Naive thymus-derived CD4-positive, alpha-beta T cell (primary cell): ENCODE measurements at regions of chr3 and their contacts with region 1.

Region 1: GRCh38 chr3:12810013-12810780 is 13.7 kb downstream of the CAND2 start:
- DNase-seq: peak; percentile 89 to 98 (median 94)
- ATAC-seq: peak; percentile 99
- H3K4me3 ChIP-seq: peak overlapping the region; percentile 79
- H3K4me3 Mint-ChIP-seq: peak overlapping the region; percentile 63 to 82 (median 77)
- H3K27ac ChIP-seq: peak overlapping the region; percentile 68
- H3K27ac Mint-ChIP-seq: peak overlapping the region; percentile 23 to 85 (median 64)
- H3K4me1 ChIP-seq: peaks cover 3 to 7% of the 10 kb centered on the region in 2 donors
- H3K4me1 Mint-ChIP-seq: peaks cover 4 to 16% (median 12%) of the 10 kb centered on the region in 7 donors
- H3K27me3 ChIP-seq: no peaks in the 10 kb centered on the region
- H3K27me3 Mint-ChIP-seq: peaks cover 0 to 11% (median 0%) of the 10 kb centered on the region in 5 donors

Region 2: GRCh38 chr3:12782172-12782815 is 27.9 kb before region 1 on chr3:
- CTCF ChIA-PET with region 1: interaction called, 14 read pairs
- POLR2A ChIA-PET with region 1: no interaction called
- intact Hi-C with region 1: loop called in 1 of 2 experiments (anchors 1 kb)
- DNase-seq: no peak
- ATAC-seq: no peak
- H3K4me3 ChIP-seq: no peak overlapping the region
- H3K4me3 Mint-ChIP-seq: no peak overlapping the region
- H3K27ac ChIP-seq: no peak overlapping the region
- H3K27ac Mint-ChIP-seq: no peak overlapping the region
- H3K4me1 ChIP-seq: no peaks in the 10 kb centered on the region
- H3K4me1 Mint-ChIP-seq: no peaks in the 10 kb centered on the region
- H3K27me3 ChIP-seq: no peaks in the 10 kb centered on the region
- H3K27me3 Mint-ChIP-seq: peaks cover 0 to 28% (median 21%) of the 10 kb centered on the region in 5 donors

Region 3: GRCh38 chr3:12796171-12797123 is 13.8 kb before region 1 on chr3 and contains the start of gene CAND2:
- CTCF ChIA-PET with region 1: interaction called, 12 read pairs
- POLR2A ChIA-PET with region 1: interaction called, 15 read pairs
- intact Hi-C with region 1: loop called in 1 of 2 experiments (anchors 1 kb)
- DNase-seq: peak; percentile 22 to 58 (median 40)
- ATAC-seq: peak; percentile 82
- H3K4me3 ChIP-seq: peak within 1 kb of the TSS; percentile 66
- H3K4me3 Mint-ChIP-seq: peak within 1 kb of the TSS; percentile 74 to 95 (median 89)
- H3K27ac ChIP-seq: peak within 1 kb of the TSS; percentile 55
- H3K27ac Mint-ChIP-seq: peak within 1 kb of the TSS in 8 of 9 donors; percentile 76 to 97 (median 82)
- H3K4me1 ChIP-seq: peaks cover 0 to 5% of the 10 kb centered on the region in 2 donors
- H3K4me1 Mint-ChIP-seq: peaks cover 0 to 28% (median 11%) of the 10 kb centered on the region in 7 donors
- H3K27me3 ChIP-seq: no peaks in the 10 kb centered on the region
- H3K27me3 Mint-ChIP-seq: peaks cover 0 to 33% (median 6%) of the 10 kb centered on the region in 5 donors
- total RNA-seq, gene CAND2: 0.15 to 8.2 (median 4.3) TPM

Region 4: GRCh38 chr3:12967606-12968351 is 157.6 kb after region 1 on chr3:
- CTCF ChIA-PET with region 1: no interaction called
- POLR2A ChIA-PET with region 1: no interaction called
- intact Hi-C with region 1: loop called (anchors 1 to 5 kb)
- DNase-seq: peak; percentile 71 to 87 (median 83)
- ATAC-seq: peak; percentile 99
- H3K4me3 ChIP-seq: peak overlapping the region; percentile 47
- H3K4me3 Mint-ChIP-seq: peak overlapping the region; percentile 74 to 87 (median 86)
- H3K27ac ChIP-seq: peak overlapping the region; percentile 29
- H3K27ac Mint-ChIP-seq: peak overlapping the region in 4 of 9 donors; percentile 9 to 84 (median 60)
- H3K4me1 ChIP-seq: peaks cover 47 to 53% of the 10 kb centered on the region in 2 donors
- H3K4me1 Mint-ChIP-seq: peaks cover 50 to 86% (median 77%) of the 10 kb centered on the region in 7 donors
- H3K27me3 ChIP-seq: no peaks in the 10 kb centered on the region
- H3K27me3 Mint-ChIP-seq: peaks cover 0 to 5% (median 0%) of the 10 kb centered on the region in 5 donors